Right ventricle myocardium inferior (tissue), 1 donor: ENCODE measurements at regions of chr22 and their contacts with region 1.

Region 1: GRCh38 chr22:32528984-32529982 is 54.7 kb downstream of the FBXO7 start:
- DNase-seq: peak; percentile 92
- ATAC-seq: peak; percentile 77

Region 2: GRCh38 chr22:32389685-32390084 is 139.6 kb before region 1 on chr22:
- intact Hi-C with region 1: no loop called
- DNase-seq: no peak
- ATAC-seq: no peak

Region 3: DNA sequence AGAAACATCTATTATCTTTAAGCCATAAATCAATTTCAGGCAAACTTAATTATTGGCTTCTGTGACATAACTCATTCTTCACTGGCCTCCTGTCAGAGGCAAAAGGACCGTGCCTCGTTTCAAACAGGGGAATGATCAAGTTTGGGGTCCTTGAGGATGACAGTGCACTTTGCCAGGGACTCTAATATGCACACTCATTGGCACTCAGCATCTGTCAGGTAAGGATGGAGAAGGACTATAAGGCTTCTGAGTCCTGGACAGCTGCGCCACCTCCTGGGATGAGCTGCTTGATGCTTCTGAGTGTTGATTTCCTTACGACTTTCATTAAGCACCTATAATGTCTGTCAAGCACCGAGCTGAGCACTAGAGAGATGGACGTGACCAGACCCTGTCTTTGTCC is 85.2 kb before region 1 on chr22:
- intact Hi-C with region 1: no loop called
- DNase-seq: no peak
- ATAC-seq: no peak

Region 4: GRCh38 chr22:32564170-32565001 is 35.1 kb after region 1 on chr22:
- intact Hi-C with region 1: no loop called
- DNase-seq: no peak
- ATAC-seq: peak; percentile 45

Region 5: GRCh38 chr22:32619614-32620426 is 90.5 kb after region 1 on chr22:
- intact Hi-C with region 1: loop called (anchors 2 kb)
- DNase-seq: no peak
- ATAC-seq: peak; percentile 59

Region 6: DNA sequence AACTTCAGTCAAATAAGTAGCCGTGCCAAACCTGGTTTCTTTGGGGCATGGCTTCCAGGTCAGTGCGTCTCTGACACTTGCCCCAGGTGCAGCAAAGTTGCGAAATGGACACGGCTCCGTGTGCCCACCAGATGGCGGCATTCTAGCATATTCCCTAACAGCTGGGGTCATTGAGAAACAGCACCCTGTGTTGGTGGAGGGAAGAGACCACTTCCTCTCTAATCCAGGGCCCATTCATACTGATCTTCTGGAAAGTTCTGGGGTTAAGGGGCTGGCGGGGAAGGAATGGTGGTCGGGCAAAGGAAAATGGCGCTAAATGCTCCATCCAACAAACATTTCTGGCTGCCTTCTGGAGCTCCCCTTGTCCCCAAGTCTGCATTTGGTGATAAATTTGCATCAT is 131.0 kb after region 1 on chr22:
- intact Hi-C with region 1: loop called (anchors 1 kb)
- DNase-seq: peak; percentile 80
- ATAC-seq: peak; percentile 61

Region 7: DNA sequence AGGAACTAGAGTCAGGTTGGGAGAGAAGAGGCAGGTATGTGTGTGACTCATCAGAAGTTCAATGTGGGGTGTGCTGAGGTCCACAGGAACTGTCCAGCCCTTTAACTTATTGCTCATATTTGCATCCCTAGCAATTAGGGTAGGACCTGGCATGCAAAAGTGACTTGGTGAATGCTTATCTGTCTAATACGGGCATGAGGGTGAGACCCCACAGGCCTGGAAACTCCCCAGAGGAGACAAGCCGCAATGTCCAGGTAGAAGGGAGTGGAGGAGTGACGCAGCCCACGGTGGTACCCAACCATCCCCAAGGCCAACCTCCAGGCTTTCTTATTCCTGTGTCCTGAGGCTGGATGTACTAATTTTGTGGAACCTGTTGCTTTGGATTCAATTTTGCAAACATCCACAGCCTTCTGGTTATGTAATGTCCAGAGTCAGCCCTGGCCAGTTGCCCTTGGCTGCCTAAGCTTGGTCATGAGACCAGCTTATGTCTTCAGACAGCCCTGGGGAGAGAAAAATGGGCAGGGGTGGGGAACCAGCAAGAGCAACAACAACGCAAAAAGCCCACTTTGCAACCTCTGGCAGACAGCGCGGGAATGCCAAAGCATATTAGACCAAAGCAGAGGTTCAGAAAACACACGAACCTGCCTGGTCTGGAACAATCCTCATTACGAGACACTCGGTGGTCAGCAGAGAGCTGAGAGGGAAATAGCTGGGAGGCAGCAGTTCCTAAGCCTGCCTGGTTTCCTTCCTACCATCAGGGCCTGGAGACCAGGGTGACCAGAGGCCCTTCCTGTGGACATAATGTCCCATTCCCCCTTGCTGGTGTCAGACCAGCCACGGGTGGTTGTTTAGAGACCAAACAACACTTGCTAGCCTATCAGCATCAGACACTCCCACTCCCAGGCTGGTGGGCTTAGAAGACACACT is 321.6 kb after region 1 on chr22:
- intact Hi-C with region 1: loop called (anchors 2 kb)
- DNase-seq: peak; percentile 90
- ATAC-seq: peak; percentile 47

Region 8: DNA sequence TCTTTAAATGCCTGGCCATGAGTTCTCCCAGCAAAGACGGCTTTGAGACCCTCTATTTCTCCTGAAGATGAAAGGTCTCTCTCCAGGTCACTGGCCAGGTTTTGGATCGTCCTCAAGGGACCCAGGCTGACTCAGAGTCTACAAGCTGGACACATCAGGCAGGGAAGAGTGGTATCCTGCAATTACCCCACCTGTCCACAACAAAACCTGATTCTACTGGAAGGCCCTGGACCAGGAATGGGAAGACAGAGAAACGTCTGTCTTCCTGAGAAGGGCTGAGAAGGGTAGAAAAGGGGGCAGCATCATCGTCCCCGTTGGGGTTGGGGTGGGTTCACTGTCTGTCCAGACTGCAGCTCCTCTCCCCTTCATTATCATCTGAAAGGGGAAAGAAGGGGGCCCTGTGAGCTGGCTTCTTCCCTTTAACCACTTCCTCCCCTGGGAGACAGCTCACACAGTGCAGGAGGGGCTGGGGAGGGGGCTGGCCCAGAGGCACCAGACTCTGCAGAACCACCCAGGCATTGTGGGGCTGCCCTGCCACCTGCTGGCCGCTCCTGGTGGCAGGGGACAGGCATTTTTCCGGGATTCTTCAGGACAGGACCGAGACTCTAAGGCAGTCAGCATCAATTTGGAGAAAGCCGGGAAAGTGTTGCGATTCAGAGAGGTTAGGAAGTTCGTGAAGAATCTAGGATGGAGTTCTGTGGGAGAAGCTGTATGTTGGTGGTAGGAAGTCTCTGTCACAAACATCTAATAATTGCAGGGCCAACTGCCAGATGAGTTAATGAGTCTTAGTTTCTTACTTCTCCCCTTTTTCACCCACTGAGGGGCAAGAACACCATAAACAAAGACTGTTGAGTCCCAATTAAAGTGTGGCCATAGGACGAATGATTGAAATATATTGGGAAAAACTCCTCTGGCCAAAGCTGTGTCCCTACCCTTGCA is 471.3 kb after region 1 on chr22:
- intact Hi-C with region 1: loop called (anchors 1 kb)
- DNase-seq: peak; percentile 78
- ATAC-seq: peak; percentile 77